Sciatic nerve (tissue), 2 donors: ENCODE measurements at regions of chr7 and their contacts with region 1.

Region 1: DNA sequence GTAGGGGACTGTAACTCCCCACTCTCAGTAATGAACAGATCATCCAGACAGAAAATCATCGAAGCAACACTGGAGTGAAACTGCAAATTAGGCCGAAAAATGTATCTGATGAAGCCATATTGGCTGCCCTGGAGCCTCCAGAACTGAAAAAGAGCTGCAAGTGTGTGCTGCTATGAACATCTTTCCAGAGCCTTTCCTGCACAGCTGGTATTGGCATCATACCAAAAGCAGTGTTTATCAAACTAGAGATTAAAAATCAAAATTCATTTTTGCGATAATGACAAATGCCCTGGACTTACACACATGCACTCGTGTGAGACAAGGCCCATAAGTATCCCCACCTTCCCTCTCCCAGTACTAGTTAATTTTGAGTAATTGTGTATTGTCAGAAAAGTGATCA is 6.8 kb upstream of the CLDN12 start:
- DNase-seq: no peak
- ATAC-seq: no peak

Region 2: DNA sequence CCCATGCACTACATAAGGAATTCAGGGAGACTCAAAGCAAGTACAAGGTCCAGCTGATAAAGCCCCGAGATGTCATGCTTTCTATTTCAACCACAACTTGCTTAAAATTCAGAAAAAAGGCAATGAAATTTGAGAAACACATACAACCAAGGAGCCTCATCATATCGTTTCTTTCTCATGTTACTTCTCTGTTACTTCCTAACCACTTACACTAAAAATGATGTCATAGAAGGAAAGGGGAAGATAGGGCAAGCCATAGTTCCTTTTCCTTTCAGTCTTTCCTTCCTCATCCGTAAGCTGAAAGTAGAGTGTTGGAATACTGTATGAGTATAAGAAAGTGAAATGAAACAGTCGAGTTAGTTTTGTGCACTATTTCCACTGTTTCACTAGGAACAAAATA is 171.8 kb after region 1 on chr7:
- intact Hi-C with region 1: loop called (anchors 5 kb)
- DNase-seq: no peak
- ATAC-seq: no peak